ENCODE measurements at regions of chr15 and their contacts with region 1.

Region 1: DNA sequence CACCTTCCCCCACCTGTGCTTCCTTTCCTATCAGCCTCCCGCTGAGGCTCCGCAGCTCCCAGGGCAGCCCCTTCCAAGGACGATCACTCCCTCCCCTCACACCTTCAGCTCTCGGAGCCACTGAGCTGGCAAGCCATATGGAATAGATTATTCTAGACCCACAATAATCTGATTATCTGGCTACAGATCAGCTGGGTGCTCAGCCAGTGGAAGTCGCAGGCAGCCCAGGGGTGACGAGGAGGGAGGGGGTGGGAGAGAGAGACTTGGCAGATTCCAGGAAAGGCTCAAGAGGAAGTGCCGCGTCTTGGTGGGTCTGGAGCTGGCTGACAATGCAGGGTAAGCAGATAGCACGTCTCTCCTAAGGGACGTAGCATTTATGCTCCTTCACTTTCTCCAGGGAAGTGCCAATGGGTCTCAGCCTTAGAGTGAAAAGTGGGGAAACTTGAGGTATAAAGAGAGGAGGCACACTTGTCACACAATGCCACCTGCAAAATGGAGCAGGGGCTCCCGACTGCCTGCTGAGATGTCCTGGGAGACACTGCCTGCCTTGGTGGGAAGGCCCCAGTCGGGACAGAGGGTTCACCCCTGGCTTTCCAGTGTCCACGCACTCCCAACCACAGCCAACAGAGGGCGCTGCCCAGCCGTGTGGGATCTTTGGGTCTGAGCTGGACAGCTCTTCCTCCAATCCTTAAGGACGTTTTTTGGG is 9.4 kb upstream of the MESP1 start:
- DNase-seq: peak; percentile 71
- H3K4me3 ChIP-seq: no peak overlapping the region
- H3K27ac ChIP-seq: no peak overlapping the region
- H3K4me1 ChIP-seq: no peaks in the 10 kb centered on the region
- H3K27me3 ChIP-seq: peaks cover 0 to 5% of the 10 kb centered on the region in 2 experiments
- CTCF ChIP-seq: peak; percentile 93 to 98
- POLR2A ChIP-seq: no peak

Region 2: GRCh38 chr15:89543389-89543788 is 217.1 kb before region 1 on chr15:
- CTCF ChIA-PET with region 1: no interaction called
- POLR2A ChIA-PET with region 1: no interaction called
- dilution Hi-C with region 1: no loop called
- intact Hi-C with region 1: no loop called
- DNase-seq: no peak
- H3K4me3 ChIP-seq: no peak overlapping the region
- H3K27ac ChIP-seq: no peak overlapping the region
- H3K4me1 ChIP-seq: no peaks in the 10 kb centered on the region
- H3K27me3 ChIP-seq: peaks cover 2 to 9% of the 10 kb centered on the region in 2 experiments
- CTCF ChIP-seq: no peak
- POLR2A ChIP-seq: no peak

Region 3: DNA sequence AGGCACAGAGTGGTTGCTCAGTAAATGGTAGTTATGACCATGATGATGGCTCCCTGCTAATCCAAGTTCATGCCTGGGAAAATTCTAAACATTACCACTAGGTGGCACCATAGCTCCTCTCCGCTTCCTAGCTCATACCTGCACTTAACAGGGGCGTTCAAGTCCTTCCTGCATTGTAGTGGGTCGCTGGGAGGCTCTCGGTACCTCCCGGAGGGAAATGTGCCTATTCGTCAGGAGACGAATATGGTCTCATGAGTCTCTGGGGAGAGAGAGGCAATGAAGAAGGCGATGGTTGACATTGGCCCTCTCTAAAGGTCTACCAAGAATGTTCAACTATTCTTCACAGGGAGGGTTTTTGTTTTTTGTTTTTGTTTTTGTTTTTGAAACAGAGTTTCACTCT is 20.3 kb before region 1 on chr15:
- CTCF ChIA-PET with region 1: interaction called, 33 read pairs
- POLR2A ChIA-PET with region 1: no interaction called
- dilution Hi-C with region 1: no loop called
- intact Hi-C with region 1: loop called (anchors 1 kb)
- DNase-seq: peak; percentile 86
- H3K4me3 ChIP-seq: no peak overlapping the region
- H3K27ac ChIP-seq: no peak overlapping the region
- H3K4me1 ChIP-seq: no peaks in the 10 kb centered on the region
- H3K27me3 ChIP-seq: peaks cover 3 to 4% of the 10 kb centered on the region in 2 experiments
- CTCF ChIP-seq: peak; percentile 75 to 77
- POLR2A ChIP-seq: no peak

Region 4: DNA sequence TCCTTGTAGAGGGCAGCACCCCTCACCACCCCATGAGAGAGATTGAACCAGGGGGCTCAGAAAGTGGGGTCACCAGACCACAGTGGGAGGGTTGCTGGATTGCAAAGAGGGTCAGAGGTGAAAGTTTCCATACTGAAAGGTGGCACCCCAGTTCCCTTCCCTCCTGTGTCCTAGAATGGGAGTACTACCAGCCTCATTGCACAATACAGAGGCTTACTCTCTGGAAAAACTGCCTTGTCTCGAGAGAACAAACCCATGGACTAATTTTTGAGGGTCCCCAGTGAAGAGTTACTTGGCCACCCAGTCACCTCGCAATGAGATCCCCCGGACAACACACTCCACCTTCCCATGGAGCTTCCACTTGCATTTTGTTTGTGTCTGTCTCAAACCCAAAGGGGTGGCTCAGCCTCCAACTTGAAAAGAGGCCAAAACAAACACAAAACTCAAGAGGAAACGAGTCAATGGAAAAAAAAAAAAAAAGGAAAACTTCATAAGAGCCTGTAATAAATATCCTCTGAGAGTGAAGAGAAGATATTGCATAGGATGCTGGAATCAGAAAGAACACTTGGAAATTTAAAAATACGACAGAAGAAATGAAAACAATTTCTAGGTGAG is 34.3 kb after region 1 on chr15:
- CTCF ChIA-PET with region 1: interaction called, 22 read pairs
- POLR2A ChIA-PET with region 1: no interaction called
- dilution Hi-C with region 1: no loop called
- intact Hi-C with region 1: no loop called
- DNase-seq: peak; percentile 95
- H3K4me3 ChIP-seq: no peak overlapping the region
- H3K27ac ChIP-seq: peak overlapping the region; percentile 52
- H3K4me1 ChIP-seq: peaks cover 19% of the 10 kb centered on the region
- H3K27me3 ChIP-seq: no peaks in the 10 kb centered on the region
- CTCF ChIP-seq: no peak
- POLR2A ChIP-seq: no peak

Region 5: GRCh38 chr15:89820666-89821611 is 60.5 kb after region 1 on chr15:
- CTCF ChIA-PET with region 1: interaction called, 10 read pairs
- POLR2A ChIA-PET with region 1: no interaction called
- dilution Hi-C with region 1: no loop called
- intact Hi-C with region 1: loop called (anchors 2 kb)
- DNase-seq: peak; percentile 72
- H3K4me3 ChIP-seq: no peak overlapping the region
- H3K27ac ChIP-seq: peak overlapping the region; percentile 71
- H3K4me1 ChIP-seq: peaks cover 34% of the 10 kb centered on the region
- H3K27me3 ChIP-seq: no peaks in the 10 kb centered on the region
- CTCF ChIP-seq: no peak
- POLR2A ChIP-seq: peak; percentile 36

Region 6: GRCh38 chr15:89874926-89875564 is 114.6 kb after region 1 on chr15:
- CTCF ChIA-PET with region 1: interaction called, 599 read pairs
- POLR2A ChIA-PET with region 1: interaction called, 7 read pairs
- dilution Hi-C with region 1: loop called (anchors 25 kb)
- intact Hi-C with region 1: loop called (anchors 1 kb)
- DNase-seq: peak; percentile 69
- H3K4me3 ChIP-seq: no peak overlapping the region
- H3K27ac ChIP-seq: no peak overlapping the region
- H3K4me1 ChIP-seq: no peaks in the 10 kb centered on the region
- H3K27me3 ChIP-seq: no peaks in the 10 kb centered on the region
- CTCF ChIP-seq: peak; percentile 96 to 98
- POLR2A ChIP-seq: no peak

Region 7: GRCh38 chr15:89912674-89913396 is 152.4 kb after region 1 on chr15 and contains the start of gene ARPIN:
- CTCF ChIA-PET with region 1: interaction called, 12 read pairs
- POLR2A ChIA-PET with region 1: no interaction called
- dilution Hi-C with region 1: no loop called
- intact Hi-C with region 1: no loop called
- DNase-seq: peak; percentile 38
- H3K4me3 ChIP-seq: peak within 1 kb of the TSS; percentile 61 to 84 (median 68)
- H3K27ac ChIP-seq: peak within 1 kb of the TSS; percentile 5
- H3K4me1 ChIP-seq: peaks cover 11% of the 10 kb centered on the region
- H3K27me3 ChIP-seq: no peaks in the 10 kb centered on the region
- CTCF ChIP-seq: no peak
- POLR2A ChIP-seq: peak; percentile 41
- total RNA-seq, gene ARPIN: 18.7 and 23.3 TPM in 2 replicates

Region 8: GRCh38 chr15:90086868-90087268 is 326.4 kb after region 1 on chr15:
- CTCF ChIA-PET with region 1: interaction called, 16 read pairs
- POLR2A ChIA-PET with region 1: no interaction called
- dilution Hi-C with region 1: no loop called
- intact Hi-C with region 1: loop called (anchors 1 kb)
- DNase-seq: peak; percentile 50
- H3K4me3 ChIP-seq: no peak overlapping the region
- H3K27ac ChIP-seq: no peak overlapping the region
- H3K4me1 ChIP-seq: no peaks in the 10 kb centered on the region
- H3K27me3 ChIP-seq: no peaks in the 10 kb centered on the region
- CTCF ChIP-seq: peak; percentile 83 to 91
- POLR2A ChIP-seq: no peak

Measured in endothelial cell of umbilical vein (primary cell).